AG04449 (cell line): ENCODE measurements at regions of chr6 and their contacts with region 1.

Region 1: DNA sequence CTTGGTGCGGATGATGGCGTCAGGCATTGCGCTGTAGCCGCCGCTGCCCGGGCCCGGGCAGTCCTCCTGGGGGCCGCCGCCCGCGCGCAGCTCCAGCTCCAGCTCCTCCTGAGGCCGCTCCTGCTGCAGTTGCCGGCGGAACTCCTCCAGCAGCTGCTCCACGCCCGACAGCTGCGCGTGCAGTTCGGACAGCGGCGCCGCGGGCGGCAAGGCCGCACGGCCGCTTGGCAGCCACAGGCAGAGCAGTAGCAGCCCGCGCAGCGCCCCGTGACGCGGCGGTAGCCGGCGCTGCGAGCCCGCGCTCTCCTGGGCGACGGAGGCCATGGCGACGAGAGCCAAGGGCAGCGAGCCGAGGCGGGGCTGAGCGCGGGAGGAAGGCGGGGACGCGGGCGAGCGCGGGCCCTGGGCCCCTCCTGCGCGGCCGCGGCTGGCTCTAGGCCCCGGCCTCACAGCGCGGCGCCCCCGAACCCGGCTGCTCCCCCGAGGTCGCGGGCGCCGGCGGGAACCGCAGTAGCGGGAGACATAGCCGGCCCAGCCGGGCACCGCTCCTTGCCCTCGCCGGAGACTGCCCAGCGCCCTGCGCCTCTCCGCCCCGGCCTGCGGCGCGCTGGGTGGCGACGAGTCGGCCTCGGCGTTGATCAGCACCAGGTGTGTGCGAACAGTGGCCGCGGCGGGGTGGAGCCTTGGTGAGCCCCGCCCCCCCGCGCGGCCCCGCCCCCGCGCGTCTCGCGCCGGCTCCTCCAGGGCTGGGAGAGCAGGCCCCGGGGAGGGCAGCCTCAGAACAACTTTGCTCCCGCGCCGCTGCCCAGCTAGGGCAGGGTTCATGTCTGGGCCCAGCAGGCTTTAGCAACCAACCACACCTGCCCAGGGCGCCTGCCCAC is at the start of gene LRP11:
- DNase-seq: no peak
- H3K4me3 ChIP-seq: peak within 1 kb of the TSS; percentile 67
- CTCF ChIP-seq: no peak

Region 2: GRCh38 chr6:149755300-149756260 is 108.4 kb before region 1 on chr6:
- CTCF ChIA-PET with region 1: no interaction called
- POLR2A ChIA-PET with region 1: no interaction called
- DNase-seq: no peak
- H3K4me3 ChIP-seq: no peak overlapping the region
- CTCF ChIP-seq: no peak

Region 3: DNA sequence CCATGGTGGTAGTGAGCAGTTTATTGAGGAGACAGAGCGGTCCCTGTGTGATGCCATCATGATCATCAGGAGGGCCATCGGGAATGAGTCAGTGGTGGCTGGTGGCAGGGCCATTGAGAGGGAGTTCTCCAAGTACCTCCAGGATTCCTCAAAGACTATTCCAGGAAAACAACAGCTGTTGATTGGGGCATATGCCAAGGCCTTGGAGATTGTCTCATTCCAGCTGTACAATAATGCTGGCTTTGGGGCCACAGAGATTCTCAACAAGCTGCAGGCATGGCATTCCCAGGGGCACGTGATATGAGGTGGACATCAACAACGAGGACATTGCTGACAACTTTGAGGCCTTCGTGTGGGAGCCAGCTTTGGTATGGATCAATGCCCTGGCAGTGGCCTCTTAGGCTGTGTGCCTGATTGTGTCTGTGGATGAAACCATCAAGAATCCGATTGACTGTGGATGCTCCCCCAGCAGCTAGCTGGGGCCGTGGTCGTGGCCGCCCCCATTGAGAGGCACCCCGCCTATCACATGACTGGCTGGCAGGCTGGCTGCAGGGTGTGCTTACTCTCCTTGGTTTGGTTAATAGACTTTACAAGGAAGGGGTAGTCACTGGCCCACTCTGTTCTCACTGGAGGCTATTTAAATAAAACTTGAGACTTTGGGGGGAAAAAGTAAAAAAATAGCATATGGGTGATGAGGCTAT is 17.3 kb after region 1 on chr6:
- CTCF ChIA-PET with region 1: interaction called, 34 read pairs
- POLR2A ChIA-PET with region 1: no interaction called
- DNase-seq: no peak
- H3K4me3 ChIP-seq: no peak overlapping the region
- CTCF ChIP-seq: no peak

Region 4: DNA sequence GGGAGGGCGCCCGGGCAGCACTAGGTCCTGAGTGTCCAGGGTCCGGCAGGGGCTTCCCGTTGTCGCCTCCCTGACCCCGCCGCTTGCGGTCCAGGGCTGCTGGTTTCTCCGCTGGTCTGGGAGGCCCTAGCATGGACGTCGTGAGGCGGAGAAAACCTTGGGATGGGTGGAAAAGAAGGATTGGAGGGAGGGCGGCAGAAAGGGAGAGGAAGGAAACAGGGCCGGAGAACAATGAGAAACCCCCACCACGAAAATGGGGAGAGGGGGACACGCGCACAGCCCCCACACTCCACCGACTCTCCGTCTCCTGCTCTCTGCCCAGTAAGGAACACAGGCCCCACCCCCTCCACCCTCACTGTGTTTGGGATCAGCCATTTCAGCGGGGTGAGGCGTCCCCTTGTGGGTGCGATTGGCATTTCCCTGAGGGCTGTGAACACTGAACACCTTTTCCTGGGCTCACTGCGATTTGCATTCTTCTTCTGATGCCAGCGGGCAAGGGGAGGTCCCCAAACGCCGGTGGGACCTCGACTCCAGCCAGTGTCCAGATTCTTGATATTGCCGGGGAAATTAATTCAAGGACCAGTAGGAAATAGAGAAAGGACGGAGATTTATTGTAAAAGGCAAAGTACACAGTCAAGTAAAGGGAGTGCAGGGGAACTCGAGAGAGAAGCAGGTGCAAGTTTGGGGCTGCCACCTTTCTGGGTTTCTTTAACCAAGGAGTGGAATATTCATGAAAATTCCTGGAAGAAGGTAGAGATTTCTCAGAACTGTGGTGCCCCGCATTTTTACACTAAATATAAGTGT is 62.2 kb after region 1 on chr6:
- CTCF ChIA-PET with region 1: interaction called, 11 read pairs
- POLR2A ChIA-PET with region 1: no interaction called
- DNase-seq: no peak
- H3K4me3 ChIP-seq: peak overlapping the region; percentile 57
- CTCF ChIP-seq: peak; percentile 93

Region 5: GRCh38 chr6:150004783-150005717 is 141.1 kb after region 1 on chr6:
- CTCF ChIA-PET with region 1: no interaction called
- POLR2A ChIA-PET with region 1: no interaction called
- DNase-seq: no peak
- H3K4me3 ChIP-seq: peak overlapping the region; percentile 66
- CTCF ChIP-seq: no peak

Region 6: DNA sequence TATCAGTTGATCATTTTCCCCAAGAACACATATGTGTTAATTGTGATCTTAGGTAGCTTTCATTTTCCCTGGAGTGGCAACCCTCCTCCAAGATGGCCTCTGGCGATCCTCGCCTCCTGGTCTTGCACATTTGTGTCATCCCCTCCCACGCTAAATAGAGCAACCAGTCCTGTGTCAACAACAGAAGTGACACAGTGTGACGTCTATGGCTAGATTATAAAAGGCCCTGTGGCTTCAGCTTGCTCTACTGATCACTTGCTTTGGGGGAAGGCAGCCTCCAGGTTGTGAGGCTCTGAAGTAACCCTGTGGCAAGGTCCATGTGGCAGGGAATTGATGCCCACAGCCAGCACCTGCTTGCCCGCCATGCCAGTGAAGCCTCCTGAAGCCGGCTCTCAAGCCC is 248.3 kb after region 1 on chr6:
- CTCF ChIA-PET with region 1: no interaction called
- POLR2A ChIA-PET with region 1: no interaction called
- DNase-seq: no peak
- H3K4me3 ChIP-seq: no peak overlapping the region
- CTCF ChIP-seq: no peak

Region 7: GRCh38 chr6:150403458-150404246 is 539.7 kb after region 1 on chr6:
- CTCF ChIA-PET with region 1: no interaction called
- POLR2A ChIA-PET with region 1: no interaction called
- DNase-seq: peak; percentile 52
- H3K4me3 ChIP-seq: no peak overlapping the region
- CTCF ChIP-seq: no peak